ENCODE measurements at regions of chr17 and their contacts with region 1.

Region 1: DNA sequence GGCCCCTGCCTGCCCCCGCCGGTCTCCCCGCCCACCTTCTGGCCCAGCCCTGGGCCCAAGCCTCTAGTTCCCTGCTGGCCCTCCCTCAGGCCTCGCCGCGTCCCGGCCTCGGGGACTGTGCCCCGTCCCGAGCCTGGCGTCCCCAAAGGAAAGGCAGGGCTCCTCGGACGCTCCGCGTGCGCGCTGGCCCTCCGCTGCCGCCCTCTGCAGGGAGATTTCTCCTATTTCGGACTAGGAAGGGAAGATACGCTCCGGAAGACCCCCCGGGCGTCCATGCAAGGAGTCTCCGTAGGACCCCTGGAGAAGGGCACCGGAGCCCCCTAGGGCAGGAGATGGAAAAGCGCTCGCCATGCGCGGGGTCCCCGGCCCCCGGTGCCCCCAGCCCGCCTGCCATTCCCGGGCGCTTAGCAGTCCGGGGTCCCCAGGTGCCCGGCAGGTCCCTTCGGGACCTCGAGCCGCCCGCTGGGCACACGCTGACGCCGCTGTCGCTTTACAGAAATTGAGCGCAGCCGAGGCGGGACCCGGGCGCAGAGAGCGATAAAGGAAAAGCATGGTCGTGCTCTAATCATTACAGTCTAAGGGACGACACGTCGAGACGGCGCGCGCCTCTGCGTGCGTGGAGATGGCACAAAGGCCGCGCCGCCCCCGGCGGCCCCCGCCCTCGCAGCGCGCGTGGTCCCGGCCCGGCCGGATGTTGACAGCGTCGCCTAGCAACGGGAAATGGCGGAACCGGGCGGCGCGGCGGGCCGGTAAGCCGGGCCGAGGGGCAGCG is at the start of gene CCDC40:
- DNase-seq: peak; percentile 88 to 92 (median 90)
- ATAC-seq: peak; percentile 89 to 96 (median 96)
- H3K4me3 ChIP-seq: peak within 1 kb of the TSS; percentile 55 to 95 (median 84)
- H3K27ac ChIP-seq: peak within 1 kb of the TSS; percentile 82 to 96 (median 88)
- H3K4me1 ChIP-seq: peaks cover 0 to 28% (median 9%) of the 10 kb centered on the region in 12 donors
- H3K27me3 ChIP-seq: peaks cover 0 to 9% (median 0%) of the 10 kb centered on the region in 9 donors
- CTCF ChIP-seq: peak in 3 of 12 donors; percentile 24 to 39 (median 28)
- POLR2A ChIP-seq: peak in 1 of 2 donors; percentile 33
- total RNA-seq, gene CCDC40: 2.4 to 9.0 (median 5.9) TPM

Region 2: DNA sequence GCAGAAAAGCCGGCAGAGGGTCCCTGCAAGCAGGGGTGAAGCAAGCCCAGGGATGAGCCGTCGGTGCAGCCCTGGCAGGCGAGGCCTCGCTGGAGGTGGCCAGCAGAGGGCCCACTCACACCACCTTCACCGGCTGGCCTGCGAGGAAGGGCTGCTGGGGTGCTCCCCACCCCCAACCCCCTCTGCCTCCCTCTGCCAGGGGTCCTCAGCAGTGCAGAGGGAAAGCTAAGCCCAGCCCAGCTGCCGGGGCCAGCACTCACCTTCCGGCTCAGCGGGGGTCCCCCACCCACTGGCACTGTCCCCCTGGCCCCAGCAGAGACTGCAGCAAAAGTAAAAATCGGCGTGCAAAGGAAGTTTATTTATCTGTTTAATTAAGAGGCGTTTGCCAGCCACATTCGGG is 848.1 kb before region 1 on chr17:
- intact Hi-C with region 1: no loop called
- DNase-seq: no peak
- ATAC-seq: peak in 2 of 4 donors; percentile 54 to 70
- H3K4me3 ChIP-seq: no peak overlapping the region
- H3K27ac ChIP-seq: no peak overlapping the region
- H3K4me1 ChIP-seq: peaks cover 0 to 11% (median 0%) of the 10 kb centered on the region in 12 donors
- H3K27me3 ChIP-seq: peaks cover 37 to 100% (median 58%) of the 10 kb centered on the region in 9 donors
- CTCF ChIP-seq: peak; percentile 19 to 60 (median 40)
- POLR2A ChIP-seq: no peak

Region 3: GRCh38 chr17:79951361-79952264 is 84.5 kb before region 1 on chr17:
- intact Hi-C with region 1: no loop called
- DNase-seq: peak; percentile 47 to 80 (median 62)
- ATAC-seq: peak; percentile 40 to 82 (median 68)
- H3K4me3 ChIP-seq: peak overlapping the region in 7 of 12 donors; percentile 5 to 27 (median 10)
- H3K27ac ChIP-seq: peak overlapping the region in 9 of 12 donors; percentile 5 to 68 (median 22)
- H3K4me1 ChIP-seq: peaks cover 0 to 26% (median 18%) of the 10 kb centered on the region in 12 donors
- H3K27me3 ChIP-seq: no peaks in the 10 kb centered on the region
- CTCF ChIP-seq: peak in 1 of 12 donors; percentile 5
- POLR2A ChIP-seq: no peak

Region 4: DNA sequence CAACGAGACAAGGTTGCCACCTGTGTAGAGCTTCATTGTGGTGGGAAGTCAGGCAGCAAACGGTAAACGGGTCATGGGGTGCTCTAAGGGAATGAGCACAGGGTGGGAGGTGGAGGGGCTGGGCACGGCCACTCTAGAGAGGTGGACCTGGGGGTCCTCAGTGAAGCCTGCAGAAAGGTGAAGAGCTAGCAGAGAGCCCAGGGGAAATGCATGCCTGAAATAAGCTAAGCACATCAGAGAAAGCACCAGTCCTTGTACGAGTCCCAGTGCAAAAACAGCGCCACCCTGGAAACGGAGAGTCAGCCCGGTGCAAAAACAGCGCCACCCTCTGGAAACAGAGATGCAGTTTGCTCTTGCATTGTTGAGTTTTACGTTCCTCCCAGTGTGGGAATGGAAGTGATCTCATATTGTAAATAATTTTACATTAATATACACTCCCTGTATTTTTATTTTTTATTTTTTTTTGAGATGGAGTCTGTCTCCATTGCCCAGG is 65.5 kb before region 1 on chr17:
- intact Hi-C with region 1: no loop called
- DNase-seq: peak in 1 of 5 donors; percentile 62
- ATAC-seq: peak in 2 of 4 donors; percentile 46 to 47
- H3K4me3 ChIP-seq: no peak overlapping the region
- H3K27ac ChIP-seq: no peak overlapping the region
- H3K4me1 ChIP-seq: no peaks in the 10 kb centered on the region
- H3K27me3 ChIP-seq: no peaks in the 10 kb centered on the region
- CTCF ChIP-seq: peak in 11 of 12 donors; percentile 20 to 49 (median 44)
- POLR2A ChIP-seq: no peak

Region 5: GRCh38 chr17:80071116-80071980 is 35.2 kb after region 1 on chr17:
- intact Hi-C with region 1: loop called in 1 of 10 experiments (anchors 2 kb)
- DNase-seq: peak; percentile 47 to 71 (median 62)
- ATAC-seq: peak; percentile 67 to 79 (median 68)
- H3K4me3 ChIP-seq: peak overlapping the region; percentile 3 to 59 (median 44)
- H3K27ac ChIP-seq: peak overlapping the region; percentile 72 to 92 (median 86)
- H3K4me1 ChIP-seq: peaks cover 0 to 40% (median 31%) of the 10 kb centered on the region in 12 donors
- H3K27me3 ChIP-seq: no peaks in the 10 kb centered on the region
- CTCF ChIP-seq: no peak
- POLR2A ChIP-seq: no peak

Region 6: DNA sequence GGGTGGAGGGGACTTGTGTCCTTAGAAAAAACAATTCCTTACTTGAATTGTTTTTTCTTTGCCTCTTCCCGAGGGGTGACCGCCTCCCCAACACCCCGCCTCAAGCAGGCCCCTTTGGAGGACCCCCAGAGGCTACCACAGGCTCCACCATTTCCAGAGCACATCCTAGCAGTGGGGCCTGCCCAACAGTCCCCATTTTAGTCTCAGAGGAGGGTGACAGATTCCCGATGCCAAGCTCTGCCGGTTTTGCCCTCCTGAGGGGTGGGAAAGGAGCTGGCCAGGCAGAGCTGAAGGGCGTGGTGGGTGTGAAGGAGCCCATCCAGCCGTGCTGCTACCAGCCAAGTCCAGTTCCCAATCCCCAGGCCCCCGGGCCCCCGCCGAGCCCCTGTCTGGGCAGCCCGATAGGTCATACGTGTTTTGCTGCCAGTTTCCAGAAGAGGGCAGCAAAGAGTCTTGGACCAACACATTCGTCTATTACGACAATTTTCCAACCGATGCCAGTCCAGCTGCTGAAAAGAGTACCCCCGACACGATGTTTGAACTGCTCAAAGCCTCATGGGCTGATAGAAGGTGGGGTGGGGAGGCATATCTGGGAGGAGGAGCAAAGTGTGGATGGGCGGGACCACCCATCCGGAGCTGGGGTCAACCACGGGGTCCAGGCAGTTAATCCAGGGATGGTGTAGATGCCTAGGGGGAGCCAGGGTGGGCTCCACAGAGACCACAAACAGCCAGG is 46.4 kb after region 1 on chr17:
- intact Hi-C with region 1: loop called in 1 of 10 experiments (anchors 10 kb)
- DNase-seq: peak in 4 of 5 donors; percentile 49 to 63 (median 50)
- ATAC-seq: peak in 3 of 4 donors; percentile 56 to 69 (median 61)
- H3K4me3 ChIP-seq: peak overlapping the region in 3 of 12 donors; percentile 11 to 26 (median 25)
- H3K27ac ChIP-seq: no peak overlapping the region
- H3K4me1 ChIP-seq: peaks cover 0 to 8% (median 4%) of the 10 kb centered on the region in 12 donors
- H3K27me3 ChIP-seq: no peaks in the 10 kb centered on the region
- CTCF ChIP-seq: peak; percentile 65 to 82 (median 76)
- POLR2A ChIP-seq: no peak

Measured in heart left ventricle (tissue), 16 donors.